BJ (cell line): ENCODE measurements at regions of chr2 and their contacts with region 1.

Region 1: GRCh38 chr2:71536226-71536671 is 82.9 kb downstream of the DYSF start:
- DNase-seq: peak; percentile 83
- H3K4me3 ChIP-seq: no peak overlapping the region
- H3K27me3 ChIP-seq: peaks cover 2% of the 10 kb centered on the region; the same call in 1 of the 2 replicates
- CTCF ChIP-seq: no peak

Region 2: GRCh38 chr2:70703900-70704549 is 832.2 kb before region 1 on chr2:
- CTCF ChIA-PET with region 1: no interaction called
- POLR2A ChIA-PET with region 1: no interaction called
- DNase-seq: no peak
- H3K4me3 ChIP-seq: no peak overlapping the region
- H3K27me3 ChIP-seq: no peaks in the 10 kb centered on the region
- CTCF ChIP-seq: no peak

Region 3: DNA sequence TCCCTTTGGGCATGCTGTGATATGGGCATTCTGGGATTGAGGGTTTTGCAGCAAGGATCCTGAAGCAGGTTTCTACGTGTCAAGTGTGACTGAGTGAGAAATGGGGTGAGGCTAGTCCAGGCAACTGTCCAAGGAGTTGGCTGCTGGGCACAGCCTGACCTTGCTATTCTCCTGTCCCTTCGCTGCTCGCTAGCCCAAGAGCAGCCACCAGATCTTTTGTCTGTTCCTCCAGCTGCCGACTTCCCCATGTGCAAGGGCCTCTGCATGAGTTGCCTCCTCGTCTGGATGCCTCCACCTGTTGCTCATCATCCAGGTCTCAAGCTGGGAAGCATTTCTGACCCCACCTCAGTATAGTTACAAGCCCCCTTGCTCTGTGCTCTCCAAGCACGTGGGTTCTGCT is 11.8 kb before region 1 on chr2:
- CTCF ChIA-PET with region 1: interaction called, 15 read pairs
- POLR2A ChIA-PET with region 1: no interaction called
- DNase-seq: no peak
- H3K4me3 ChIP-seq: no peak overlapping the region
- H3K27me3 ChIP-seq: peaks cover 12% of the 10 kb centered on the region
- CTCF ChIP-seq: no peak